B cell (primary cell): ENCODE measurements at regions of chr2 and their contacts with region 1.

Region 1: DNA sequence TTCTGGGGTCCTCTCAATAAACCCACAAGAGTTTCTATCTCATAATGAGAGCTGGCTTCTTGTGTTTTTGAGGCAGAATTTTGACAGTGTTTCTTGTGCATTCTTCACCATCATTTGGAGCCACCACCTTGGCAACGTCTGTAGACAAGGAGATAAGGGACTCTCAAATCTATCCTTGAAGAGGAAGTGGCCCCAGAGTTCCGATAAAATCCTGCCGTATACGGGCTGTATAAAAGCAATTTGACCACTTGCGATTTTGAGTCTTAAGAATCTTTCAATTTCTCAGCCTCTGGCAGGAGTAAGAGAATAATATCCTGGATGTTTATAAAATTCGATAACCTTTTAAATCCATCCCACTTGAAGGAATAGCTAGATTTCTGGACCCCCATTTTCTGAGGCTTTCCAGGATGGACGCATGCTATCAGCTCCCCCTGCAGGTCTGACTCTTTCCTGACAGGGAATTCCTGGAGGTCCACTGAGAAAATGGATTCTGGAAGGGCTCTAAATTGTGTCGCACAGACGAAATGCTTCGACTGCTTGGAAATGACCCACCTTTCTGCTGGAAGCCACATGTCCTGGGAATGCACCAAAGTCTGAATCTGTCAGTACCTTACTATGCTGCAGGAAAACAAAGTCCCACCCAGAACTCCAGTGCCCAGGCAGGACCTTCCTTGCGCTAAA is 54.1 kb downstream of the E2F6 start:
- DNase-seq: peak; percentile 22
- ATAC-seq: no peak
- H3K4me3 ChIP-seq: peak overlapping the region in 1 of 5 experiments; percentile 15
- H3K4me3 Mint-ChIP-seq: no peak overlapping the region
- H3K27ac ChIP-seq: no peak overlapping the region
- H3K27ac Mint-ChIP-seq: no peak overlapping the region
- H3K4me1 ChIP-seq: no peaks in the 10 kb centered on the region
- H3K4me1 Mint-ChIP-seq: no peaks in the 10 kb centered on the region
- H3K27me3 ChIP-seq: peaks cover 0 to 14% (median 5%) of the 10 kb centered on the region in 4 experiments
- H3K27me3 Mint-ChIP-seq: peaks cover 28% of the 10 kb centered on the region
- CTCF ChIP-seq: peak; percentile 34

Region 2: DNA sequence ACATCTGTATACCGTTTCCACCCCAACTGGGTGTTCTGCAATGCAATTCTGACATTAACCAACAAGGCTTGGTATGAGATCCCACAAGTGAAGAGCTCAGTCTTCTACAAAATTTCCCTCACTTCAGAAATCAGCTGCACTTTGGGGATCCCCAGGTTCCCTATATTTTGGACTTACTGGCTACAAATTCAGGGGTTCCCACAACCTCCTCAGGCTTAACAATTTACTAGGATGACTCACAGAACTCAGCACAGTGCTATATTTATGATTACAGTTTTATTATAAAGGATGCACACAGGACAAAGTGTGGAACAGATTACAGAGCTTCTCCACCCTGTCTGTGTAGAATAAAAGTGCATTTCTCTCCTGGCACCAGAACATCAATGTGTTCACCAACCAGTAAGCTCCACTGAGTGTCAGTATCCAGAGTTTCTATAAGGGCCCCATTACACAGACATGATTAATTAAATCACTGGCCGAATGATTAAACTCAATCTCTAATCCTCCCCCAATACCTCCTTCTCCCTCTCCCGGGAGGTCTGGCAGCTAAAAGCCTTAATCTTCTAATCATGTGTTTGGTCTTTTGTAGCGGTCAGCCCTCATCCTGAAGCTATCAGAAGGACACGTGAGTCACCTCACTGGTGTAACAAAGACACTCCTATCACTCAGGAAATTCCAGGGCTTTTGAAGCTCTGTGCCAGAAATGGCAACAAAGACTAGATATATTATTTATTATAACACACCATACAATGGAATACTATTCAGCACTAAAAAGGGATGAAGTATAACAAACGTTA is 172.0 kb before region 1 on chr2:
- CTCF ChIA-PET with region 1: interaction called, 48 read pairs
- POLR2A ChIA-PET with region 1: no interaction called
- intact Hi-C with region 1: no loop called
- DNase-seq: no peak
- ATAC-seq: no peak
- H3K4me3 ChIP-seq: no peak overlapping the region
- H3K4me3 Mint-ChIP-seq: no peak overlapping the region
- H3K27ac ChIP-seq: no peak overlapping the region
- H3K27ac Mint-ChIP-seq: no peak overlapping the region
- H3K4me1 ChIP-seq: no peaks in the 10 kb centered on the region
- H3K4me1 Mint-ChIP-seq: peaks cover 11% of the 10 kb centered on the region
- H3K27me3 ChIP-seq: no peaks in the 10 kb centered on the region
- H3K27me3 Mint-ChIP-seq: no peaks in the 10 kb centered on the region
- CTCF ChIP-seq: no peak

Region 3: GRCh38 chr2:11457935-11458334 is 46.0 kb after region 1 on chr2:
- CTCF ChIA-PET with region 1: no interaction called
- POLR2A ChIA-PET with region 1: no interaction called
- intact Hi-C with region 1: no loop called
- DNase-seq: no peak
- ATAC-seq: no peak
- H3K4me3 ChIP-seq: no peak overlapping the region
- H3K4me3 Mint-ChIP-seq: no peak overlapping the region
- H3K27ac ChIP-seq: no peak overlapping the region
- H3K27ac Mint-ChIP-seq: no peak overlapping the region
- H3K4me1 ChIP-seq: no peaks in the 10 kb centered on the region
- H3K4me1 Mint-ChIP-seq: peaks cover 4% of the 10 kb centered on the region
- H3K27me3 ChIP-seq: no peaks in the 10 kb centered on the region
- H3K27me3 Mint-ChIP-seq: no peaks in the 10 kb centered on the region
- CTCF ChIP-seq: no peak